AG04449 (cell line): ENCODE measurements at regions of chr11 and their contacts with region 1.

Region 1: GRCh38 chr11:63478896-63479295 is 12.1 kb downstream of the PLAAT5 start:
- DNase-seq: peak; percentile 37
- H3K4me3 ChIP-seq: no peak overlapping the region
- CTCF ChIP-seq: peak; percentile 81

Region 2: GRCh38 chr11:63404161-63404935 is 74.5 kb before region 1 on chr11:
- CTCF ChIA-PET with region 1: no interaction called
- POLR2A ChIA-PET with region 1: no interaction called
- DNase-seq: no peak
- H3K4me3 ChIP-seq: no peak overlapping the region
- CTCF ChIP-seq: no peak

Region 3: DNA sequence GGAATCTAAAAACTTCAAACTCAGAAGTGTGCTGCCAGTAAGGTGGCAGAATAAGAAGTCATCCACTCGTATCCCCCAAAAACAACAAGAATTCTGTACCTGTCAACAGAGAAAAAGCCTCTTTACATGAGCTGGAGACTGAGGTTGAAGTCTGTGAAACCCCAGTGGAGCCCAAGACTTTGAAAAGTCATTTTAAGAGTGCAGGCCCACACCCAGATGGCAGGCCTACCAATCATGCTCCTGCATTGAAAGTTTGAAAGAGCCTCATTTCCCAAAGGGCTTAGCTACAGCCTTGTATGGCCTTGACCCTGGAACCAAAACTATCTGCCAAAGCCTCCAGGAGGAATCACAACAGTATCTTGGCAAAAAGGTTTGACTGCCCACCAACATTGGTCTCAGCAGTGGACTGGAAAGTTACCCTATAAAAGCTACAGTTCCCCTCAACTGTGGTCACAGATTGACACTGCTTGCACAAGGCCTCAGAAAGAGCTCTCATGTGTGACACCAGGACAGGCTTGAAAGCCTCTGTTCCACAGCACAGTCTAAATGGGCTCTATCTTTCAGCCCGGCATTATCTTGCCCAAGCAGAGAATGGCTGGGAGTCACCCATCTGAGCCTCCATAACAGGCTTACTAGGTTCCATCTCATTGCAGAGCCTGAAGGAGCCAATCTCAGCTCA is 61.6 kb before region 1 on chr11:
- CTCF ChIA-PET with region 1: no interaction called
- POLR2A ChIA-PET with region 1: no interaction called
- DNase-seq: no peak
- H3K4me3 ChIP-seq: no peak overlapping the region
- CTCF ChIP-seq: no peak

Region 4: DNA sequence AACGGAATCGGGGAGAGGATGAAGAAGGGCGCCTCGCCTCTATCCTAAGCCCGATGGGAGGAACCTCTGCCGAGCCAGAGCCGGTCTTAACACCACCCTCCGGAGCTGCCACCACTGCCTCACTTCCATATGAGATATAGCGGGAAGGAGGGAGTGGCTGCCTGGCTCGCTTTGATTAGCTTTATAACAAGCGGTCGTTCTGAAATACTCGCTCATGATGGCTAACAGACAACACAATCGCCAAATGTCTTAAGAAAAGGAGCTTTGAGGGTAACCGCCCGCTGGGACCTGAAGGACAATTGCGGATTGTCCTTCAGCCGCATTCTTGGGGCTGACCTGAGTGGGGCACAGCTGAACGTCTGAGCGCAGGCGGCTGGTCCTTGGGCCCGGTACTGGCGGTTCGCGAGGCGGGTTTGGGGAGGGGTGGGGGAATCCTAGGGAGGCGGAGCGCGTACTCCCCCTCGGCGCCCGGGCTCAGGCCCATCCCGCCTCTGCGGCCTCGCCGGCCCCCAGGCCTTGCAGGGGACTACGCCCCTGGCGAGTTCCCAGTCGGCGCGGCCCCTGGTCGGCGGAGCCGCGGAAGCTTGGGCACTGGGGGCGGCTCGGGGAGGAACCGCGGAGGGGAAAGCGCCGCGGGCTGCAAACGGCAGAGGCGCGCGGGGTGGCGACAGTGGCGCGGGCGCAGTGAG is 11.8 kb after region 1 on chr11 and contains the start of gene PLAAT5:
- CTCF ChIA-PET with region 1: interaction called, 11 read pairs
- POLR2A ChIA-PET with region 1: no interaction called
- DNase-seq: no peak
- H3K4me3 ChIP-seq: peak within 1 kb of the TSS; percentile 33
- CTCF ChIP-seq: no peak

Region 5: DNA sequence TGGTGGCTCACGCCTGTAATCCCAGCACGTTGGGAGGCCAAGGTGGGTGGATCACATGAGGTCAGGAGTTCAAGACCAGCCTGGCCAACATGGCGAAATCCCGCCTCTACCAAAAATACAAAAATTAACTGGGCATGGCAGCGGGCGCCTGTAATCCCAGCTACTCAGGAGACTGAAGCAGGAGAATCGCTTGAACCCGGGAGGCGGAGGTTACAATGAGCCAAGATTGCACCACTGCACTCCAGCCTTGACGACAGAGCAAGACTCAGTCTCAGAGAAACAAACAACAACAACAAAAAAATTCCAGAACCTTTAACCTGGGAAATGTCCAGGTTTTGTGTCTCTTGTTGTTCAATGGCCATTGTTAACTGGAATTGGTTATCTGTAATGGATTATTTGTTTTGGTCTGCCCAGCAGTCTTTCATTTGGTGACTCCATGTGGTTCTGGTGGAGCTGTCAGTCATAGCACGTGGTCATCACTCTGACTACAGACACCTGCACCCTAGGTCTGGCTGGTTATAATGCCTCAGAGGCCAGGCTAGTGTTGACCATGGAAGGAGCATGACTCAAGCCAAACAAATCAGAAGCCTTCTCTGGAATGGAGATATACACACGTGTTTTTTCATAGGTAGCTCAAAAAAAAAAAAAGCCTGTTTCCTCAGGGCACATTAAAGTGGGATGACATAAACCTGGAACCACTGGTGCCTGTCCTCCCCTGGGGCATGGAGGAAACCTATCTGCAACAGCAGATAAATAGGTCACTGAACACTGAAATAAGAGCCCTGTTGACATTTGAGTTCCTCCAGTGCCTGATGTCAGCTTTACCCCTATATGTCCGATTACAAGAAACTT is 143.3 kb after region 1 on chr11:
- CTCF ChIA-PET with region 1: interaction called, 37 read pairs
- POLR2A ChIA-PET with region 1: no interaction called
- DNase-seq: no peak
- H3K4me3 ChIP-seq: no peak overlapping the region
- CTCF ChIP-seq: no peak

Region 6: DNA sequence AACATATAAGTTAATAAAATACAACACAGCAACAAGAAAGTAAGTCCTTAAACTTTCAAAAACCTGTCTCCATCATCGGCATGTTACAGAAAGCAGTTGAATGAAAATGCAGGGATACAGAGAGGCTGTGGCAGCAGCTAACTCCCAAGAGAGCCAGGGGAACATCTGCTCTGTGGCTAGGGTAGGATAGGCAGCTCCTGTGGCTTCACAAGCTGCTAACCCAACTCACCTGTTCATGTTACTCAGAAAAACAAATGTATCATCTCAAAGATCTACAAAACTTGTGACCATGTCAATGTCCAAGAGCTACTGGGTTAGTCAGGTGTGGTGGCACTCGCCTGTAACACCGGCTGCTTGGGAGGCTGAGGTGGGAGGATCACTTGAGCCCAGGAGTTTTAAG is 150.5 kb after region 1 on chr11:
- CTCF ChIA-PET with region 1: interaction called, 194 read pairs
- POLR2A ChIA-PET with region 1: no interaction called
- DNase-seq: no peak
- H3K4me3 ChIP-seq: no peak overlapping the region
- CTCF ChIP-seq: no peak

Region 7: DNA sequence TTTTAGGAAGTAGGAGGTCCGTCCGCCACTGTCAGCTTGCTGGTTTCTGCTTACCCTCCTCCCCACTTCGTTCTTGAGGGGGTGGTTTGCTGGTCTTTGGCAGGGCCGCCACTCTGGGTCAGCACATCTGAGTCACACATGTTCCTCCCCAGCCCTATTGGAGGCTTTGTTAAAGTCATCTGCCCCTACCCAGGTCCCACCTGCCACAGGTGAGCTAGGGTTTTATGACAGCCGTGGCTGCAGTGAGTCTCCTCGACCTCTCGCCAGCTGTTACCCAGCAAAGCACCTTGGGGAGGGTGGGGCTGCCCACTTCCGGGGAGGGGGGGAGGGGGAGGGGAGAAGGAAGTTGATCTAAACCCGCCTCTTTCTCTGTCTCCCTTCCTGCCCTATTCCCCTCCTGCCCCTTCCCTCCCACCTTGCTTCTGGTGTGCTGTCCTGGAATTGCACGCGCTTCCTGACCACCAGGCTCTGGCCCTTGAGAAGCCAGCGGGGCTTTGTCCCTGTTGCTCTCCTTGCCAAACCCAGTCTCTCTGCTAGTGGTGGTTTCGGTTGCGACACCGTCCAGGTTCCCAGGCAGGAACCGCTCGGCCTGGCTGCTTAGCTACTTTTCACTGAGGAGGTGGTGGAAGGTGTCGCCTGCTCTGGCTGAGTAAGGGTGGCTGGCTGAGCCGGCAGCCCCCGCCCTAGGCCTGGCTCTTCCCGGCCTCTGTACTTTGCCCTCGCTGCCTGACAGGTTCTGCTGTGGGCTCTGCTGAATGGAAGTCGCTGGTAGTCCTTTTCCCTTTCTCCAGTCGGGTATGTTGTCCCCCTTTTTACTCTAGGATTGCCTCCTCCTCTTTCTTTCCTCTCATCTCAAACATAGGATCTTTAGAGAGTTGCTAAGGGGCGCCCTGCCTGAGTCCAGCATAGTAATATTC is 409.5 kb after region 1 on chr11:
- CTCF ChIA-PET with region 1: no interaction called
- POLR2A ChIA-PET with region 1: no interaction called
- DNase-seq: no peak
- H3K4me3 ChIP-seq: no peak overlapping the region
- CTCF ChIP-seq: no peak